Activated CD4-positive, alpha-beta T cell treated with anti-CD3 and anti-CD28 coated beads for 36 hours (primary cell): ENCODE measurements at regions of chr1 and their contacts with region 1.

Region 1: DNA sequence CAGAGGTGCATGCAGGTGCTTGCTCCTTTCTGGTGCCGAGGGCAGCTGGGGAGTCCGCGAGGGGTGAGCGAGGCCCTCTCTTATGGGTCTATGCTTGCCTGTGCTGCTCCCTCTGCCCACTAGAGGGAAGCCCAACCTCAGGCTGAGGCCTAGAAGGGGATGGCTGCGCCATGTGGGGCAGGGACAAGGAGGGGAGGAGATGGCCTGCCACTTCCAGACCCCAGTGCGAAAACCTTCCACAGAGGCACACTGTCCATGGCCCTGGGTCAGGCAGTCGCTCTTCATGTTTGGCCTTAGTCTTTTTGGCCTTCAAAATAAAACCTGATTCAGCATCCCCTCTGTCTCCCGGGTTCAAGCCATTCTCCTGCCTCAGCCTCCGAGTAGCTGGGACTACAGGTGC is 14.0 kb downstream of the RHBG start:
- DNase-seq: peak; percentile 79
- ATAC-seq: peak; percentile 91
- H3K4me3 Mint-ChIP-seq: no peak overlapping the region
- H3K27ac Mint-ChIP-seq: no peak overlapping the region
- H3K4me1 Mint-ChIP-seq: peaks cover 5% of the 10 kb centered on the region
- H3K27me3 Mint-ChIP-seq: peaks cover 7% of the 10 kb centered on the region

Region 2: GRCh38 chr1:156368889-156369684 is 13.9 kb before region 1 on chr1 and contains the start of gene RHBG:
- CTCF ChIA-PET with region 1: interaction called, 14 read pairs
- POLR2A ChIA-PET with region 1: no interaction called
- intact Hi-C with region 1: no loop called
- DNase-seq: peak; percentile 35
- ATAC-seq: peak; percentile 51
- H3K4me3 Mint-ChIP-seq: peak within 1 kb of the TSS; percentile 47
- H3K27ac Mint-ChIP-seq: no peak within 1 kb of the TSS
- H3K4me1 Mint-ChIP-seq: peaks cover 2% of the 10 kb centered on the region
- H3K27me3 Mint-ChIP-seq: peaks cover 23% of the 10 kb centered on the region
- total RNA-seq, gene RHBG: not detected

Region 3: GRCh38 chr1:156421062-156421938 is 38.3 kb after region 1 on chr1:
- CTCF ChIA-PET with region 1: interaction called, 74 read pairs
- POLR2A ChIA-PET with region 1: no interaction called
- intact Hi-C with region 1: no loop called
- DNase-seq: peak; percentile 85
- ATAC-seq: peak; percentile 92
- H3K4me3 Mint-ChIP-seq: peak overlapping the region; percentile 70
- H3K27ac Mint-ChIP-seq: no peak overlapping the region
- H3K4me1 Mint-ChIP-seq: peaks cover 17% of the 10 kb centered on the region
- H3K27me3 Mint-ChIP-seq: peaks cover 75% of the 10 kb centered on the region

Region 4: DNA sequence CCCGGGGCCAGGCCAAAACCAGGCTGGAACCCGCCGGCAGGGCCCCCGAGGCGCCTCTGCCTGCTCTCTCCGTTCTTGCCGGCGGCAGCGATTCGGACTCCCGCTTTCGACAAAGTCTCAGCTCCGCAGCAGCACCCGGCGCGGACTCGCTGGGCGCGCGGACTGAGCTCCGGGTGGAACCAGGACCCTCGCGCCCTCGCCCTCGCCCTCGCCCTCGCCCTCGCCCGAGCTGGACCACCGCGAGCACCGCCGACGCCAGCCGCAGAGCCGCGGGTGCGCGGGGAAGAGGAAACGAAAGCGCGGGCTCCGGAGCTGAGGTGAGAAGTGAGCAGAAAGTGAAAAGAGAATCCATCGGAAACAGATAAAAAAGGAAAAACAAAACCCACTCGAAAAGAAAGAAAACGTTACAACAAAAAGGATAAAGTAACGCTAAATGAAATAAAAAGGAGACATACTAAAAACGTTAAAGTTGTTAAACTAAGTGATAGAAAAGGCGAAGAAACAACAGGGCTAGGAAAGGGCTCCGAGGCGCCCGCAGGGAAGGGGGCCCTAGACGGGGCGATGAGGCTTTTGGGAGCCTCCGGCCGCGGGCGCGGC is 52.6 kb after region 1 on chr1:
- CTCF ChIA-PET with region 1: interaction called, 89 read pairs
- POLR2A ChIA-PET with region 1: no interaction called
- intact Hi-C with region 1: no loop called
- DNase-seq: peak; percentile 54
- ATAC-seq: no peak
- H3K4me3 Mint-ChIP-seq: peak overlapping the region; percentile 64
- H3K27ac Mint-ChIP-seq: no peak overlapping the region
- H3K4me1 Mint-ChIP-seq: peaks cover 38% of the 10 kb centered on the region
- H3K27me3 Mint-ChIP-seq: peaks cover 81% of the 10 kb centered on the region

Region 5: DNA sequence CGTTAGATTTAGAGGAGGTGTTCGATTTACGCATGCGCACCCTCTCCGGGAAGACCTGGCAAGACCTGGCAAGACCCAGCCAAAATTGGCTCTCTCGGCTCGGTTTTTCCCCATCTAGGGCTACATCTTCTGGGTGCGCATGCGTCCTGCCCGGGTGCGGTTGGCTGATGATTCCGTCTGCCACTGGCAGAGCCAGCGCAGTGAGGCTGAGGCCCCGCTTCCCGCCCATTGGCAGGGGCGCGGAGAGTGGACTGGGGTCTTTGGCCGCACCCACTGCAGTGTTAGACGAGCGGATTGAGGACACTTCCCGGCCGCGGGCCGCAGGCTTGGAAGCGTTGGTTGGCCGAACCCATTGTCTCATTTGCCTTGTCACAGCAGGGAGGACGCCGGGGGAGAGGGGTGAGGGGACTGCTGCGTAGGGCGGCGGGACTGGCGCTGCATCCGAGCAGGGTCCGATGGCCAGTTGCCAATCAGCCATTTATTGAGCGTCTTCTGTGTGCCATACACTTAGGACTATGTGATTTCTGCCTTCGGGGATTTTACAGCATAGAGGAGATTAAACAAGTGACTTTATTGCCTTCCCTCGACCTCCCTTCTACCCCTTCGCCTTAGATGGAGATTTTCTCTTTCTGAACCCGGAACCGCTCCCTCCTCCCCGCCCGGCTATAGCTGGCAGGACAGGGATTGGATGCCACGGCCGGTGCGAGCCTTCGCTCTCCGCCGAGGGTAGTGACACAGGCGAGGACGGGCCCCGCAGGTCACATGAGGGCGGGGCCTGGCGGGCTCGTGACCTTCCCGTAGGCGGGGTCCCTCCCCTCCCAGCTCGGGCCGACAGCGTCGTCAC is 73.8 kb after region 1 on chr1:
- CTCF ChIA-PET with region 1: interaction called, 264 read pairs
- POLR2A ChIA-PET with region 1: no interaction called
- intact Hi-C with region 1: no loop called
- DNase-seq: peak; percentile 99
- ATAC-seq: peak; percentile 88
- H3K4me3 Mint-ChIP-seq: peak overlapping the region; percentile 79
- H3K27ac Mint-ChIP-seq: peak overlapping the region; percentile 98
- H3K4me1 Mint-ChIP-seq: peaks cover 22% of the 10 kb centered on the region
- H3K27me3 Mint-ChIP-seq: no peaks in the 10 kb centered on the region

Region 6: GRCh38 chr1:156601122-156601830 is 218.3 kb after region 1 on chr1 and contains the start of gene GPATCH4:
- CTCF ChIA-PET with region 1: interaction called, 17 read pairs
- POLR2A ChIA-PET with region 1: no interaction called
- intact Hi-C with region 1: no loop called
- DNase-seq: peak; percentile 89
- ATAC-seq: peak; percentile 76
- H3K4me3 Mint-ChIP-seq: peak within 1 kb of the TSS; percentile 97
- H3K27ac Mint-ChIP-seq: peak within 1 kb of the TSS; percentile 99
- H3K4me1 Mint-ChIP-seq: peaks cover 45% of the 10 kb centered on the region
- H3K27me3 Mint-ChIP-seq: no peaks in the 10 kb centered on the region
- total RNA-seq, gene GPATCH4: 38.5 to 48.7 TPM